CD4-positive, alpha-beta memory T cell (primary cell): ENCODE measurements at regions of chr12 and their contacts with region 1.

Region 1: DNA sequence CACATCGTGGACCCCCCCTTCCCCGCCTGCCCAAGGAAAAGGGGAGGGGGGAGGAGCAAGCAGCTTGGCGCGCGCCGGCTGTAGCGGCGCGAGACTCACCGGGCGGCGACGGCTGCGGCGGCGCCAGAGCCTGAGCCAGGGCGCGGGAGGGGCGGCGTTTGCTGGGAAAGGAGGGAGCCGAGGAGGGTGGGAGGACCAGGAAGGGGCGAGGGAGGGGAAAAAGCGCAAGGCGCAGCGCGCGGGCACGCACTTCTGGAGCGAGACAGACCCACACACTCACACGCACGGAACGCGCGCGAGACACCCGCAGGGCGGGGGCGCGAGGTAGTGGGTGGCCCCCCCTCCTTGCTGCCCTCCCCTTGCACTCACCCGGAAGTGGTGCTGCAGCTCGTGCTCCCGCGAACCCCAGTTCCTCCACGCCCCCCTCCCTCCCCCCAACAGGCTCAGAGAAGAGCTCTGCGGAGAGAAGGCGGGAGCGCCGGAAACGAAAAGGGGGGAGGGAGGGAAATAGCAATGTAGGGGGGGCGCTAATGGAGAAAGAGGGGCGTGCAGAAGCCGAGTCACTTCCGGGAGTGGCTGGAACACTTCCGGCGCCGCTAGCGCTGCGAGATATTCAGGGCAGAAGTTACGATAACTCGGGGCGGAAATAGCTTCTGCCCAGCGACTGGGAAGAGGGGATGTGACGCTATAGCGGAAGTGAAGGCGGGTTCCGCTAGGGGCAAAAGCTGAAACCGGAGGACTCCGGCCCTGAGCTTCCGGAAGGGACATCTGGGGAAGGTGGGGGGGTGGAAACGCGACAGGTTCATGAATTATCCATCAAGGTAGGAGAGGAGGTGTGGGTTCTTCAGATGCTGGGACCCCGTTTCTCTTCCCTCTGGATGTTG is at the start of gene ZNF384:
- DNase-seq: peak; percentile 93 to 98 (median 97)
- H3K4me3 ChIP-seq: peak within 1 kb of the TSS; percentile 59 to 83
- H3K4me3 Mint-ChIP-seq: peak within 1 kb of the TSS; percentile 92 to 98 (median 96)
- H3K27ac ChIP-seq: peak within 1 kb of the TSS; percentile 93
- H3K27ac Mint-ChIP-seq: peak within 1 kb of the TSS; percentile 92 to 100 (median 99)
- H3K4me1 ChIP-seq: peaks cover 58% of the 10 kb centered on the region
- H3K4me1 Mint-ChIP-seq: peaks cover 40 to 59% (median 46%) of the 10 kb centered on the region in 4 donors
- H3K27me3 ChIP-seq: no peaks in the 10 kb centered on the region
- H3K27me3 Mint-ChIP-seq: no peaks in the 10 kb centered on the region
- total RNA-seq, gene ZNF384: 88.6 to 88.7 TPM

Region 2: DNA sequence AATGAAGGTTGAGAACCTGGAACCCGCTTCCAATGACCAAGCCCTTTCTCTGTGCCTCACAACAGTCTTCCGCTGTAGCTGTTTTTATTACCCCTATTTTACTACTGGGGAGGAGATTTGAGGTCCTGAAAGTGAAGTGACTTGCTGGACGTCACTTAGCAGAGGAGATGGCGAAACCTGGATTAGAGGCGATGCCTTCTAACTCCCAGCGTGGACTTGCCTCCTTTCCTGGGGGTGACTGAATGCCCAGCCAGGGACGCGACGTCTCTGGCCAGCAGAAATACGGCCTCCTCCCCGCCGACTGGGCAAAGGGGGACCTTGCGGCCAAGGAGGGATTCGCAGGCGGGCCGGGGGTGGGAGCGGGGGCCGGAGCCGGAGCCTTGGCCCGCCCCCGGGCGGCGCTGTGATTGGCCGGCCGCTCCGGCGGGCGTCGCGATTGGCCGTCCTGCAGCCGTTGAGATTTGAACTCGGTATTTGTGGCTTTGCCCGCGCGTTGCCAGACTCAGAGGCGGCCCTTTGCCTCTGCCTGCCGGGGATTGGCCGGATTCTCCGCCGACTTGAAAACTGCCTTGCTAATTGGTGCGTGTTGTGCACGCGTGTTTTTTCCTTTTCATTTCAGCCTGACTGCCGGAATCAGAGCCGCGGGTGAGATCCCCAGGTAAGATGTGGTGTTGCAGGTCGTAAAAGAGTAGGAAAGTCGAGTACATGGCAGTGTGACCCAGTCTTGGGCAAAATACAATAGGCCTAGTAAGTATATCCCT is 195.6 kb before region 1 on chr12 and contains the start of gene NCAPD2:
- CTCF ChIA-PET with region 1: no interaction called
- POLR2A ChIA-PET with region 1: interaction called, 8 read pairs
- intact Hi-C with region 1: loop called (anchors 1 kb)
- DNase-seq: peak; percentile 96 to 97 (median 96)
- H3K4me3 ChIP-seq: peak within 1 kb of the TSS; percentile 98 to 99
- H3K4me3 Mint-ChIP-seq: peak within 1 kb of the TSS; percentile 89 to 98 (median 96)
- H3K27ac ChIP-seq: peak within 1 kb of the TSS; percentile 87
- H3K27ac Mint-ChIP-seq: peak within 1 kb of the TSS; percentile 90 to 99 (median 97)
- H3K4me1 ChIP-seq: peaks cover 37% of the 10 kb centered on the region
- H3K4me1 Mint-ChIP-seq: peaks cover 26 to 46% (median 35%) of the 10 kb centered on the region in 4 donors
- H3K27me3 ChIP-seq: no peaks in the 10 kb centered on the region
- H3K27me3 Mint-ChIP-seq: no peaks in the 10 kb centered on the region
- total RNA-seq, gene NCAPD2: 38.1 to 39.8 TPM

Region 3: DNA sequence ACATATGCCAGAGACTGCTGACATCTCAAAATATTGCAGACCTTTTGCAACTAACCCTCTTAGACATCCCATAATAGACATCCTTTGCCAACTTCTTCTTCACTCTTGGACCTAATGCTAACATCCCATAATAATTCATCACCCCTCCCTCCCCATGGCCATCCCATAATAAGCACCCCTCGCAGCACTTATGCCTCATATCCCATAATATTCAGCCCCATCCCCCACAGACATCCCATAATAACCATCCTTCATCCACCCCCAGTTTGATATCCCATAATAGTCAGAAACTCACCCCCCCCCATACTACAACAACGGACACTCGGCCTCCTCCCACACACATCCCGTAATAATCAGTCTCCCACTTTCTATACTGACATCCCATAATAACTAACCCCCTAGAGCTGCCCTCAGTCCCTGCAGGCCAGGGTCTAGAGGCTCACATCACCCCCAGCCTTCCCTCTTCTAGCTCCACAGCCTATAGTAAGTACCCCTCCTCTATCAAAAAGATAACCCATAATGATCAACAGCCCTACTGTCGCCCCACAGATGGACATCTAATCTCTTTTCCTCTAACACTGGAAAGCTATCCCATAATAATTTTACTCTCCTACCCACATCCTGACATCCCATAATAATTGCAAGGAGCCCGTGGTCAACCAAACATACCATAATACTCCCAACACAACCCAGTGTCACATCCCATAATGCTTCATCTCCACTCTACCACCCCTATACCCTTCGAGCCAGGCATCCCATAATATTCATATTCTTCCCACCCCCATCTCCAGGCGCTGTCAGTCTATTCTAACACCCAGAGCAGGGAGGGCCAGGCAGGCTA is 81.3 kb before region 1 on chr12:
- CTCF ChIA-PET with region 1: interaction called, 3 read pairs
- POLR2A ChIA-PET with region 1: interaction called, 25 read pairs
- intact Hi-C with region 1: loop called (anchors 1 kb)
- DNase-seq: peak; percentile 74 to 90 (median 79)
- H3K4me3 ChIP-seq: no peak overlapping the region
- H3K4me3 Mint-ChIP-seq: no peak overlapping the region
- H3K27ac ChIP-seq: peak overlapping the region; percentile 84
- H3K27ac Mint-ChIP-seq: no peak overlapping the region
- H3K4me1 ChIP-seq: peaks cover 58% of the 10 kb centered on the region
- H3K4me1 Mint-ChIP-seq: peaks cover 41 to 55% (median 47%) of the 10 kb centered on the region in 4 donors
- H3K27me3 ChIP-seq: no peaks in the 10 kb centered on the region
- H3K27me3 Mint-ChIP-seq: no peaks in the 10 kb centered on the region

Region 4: DNA sequence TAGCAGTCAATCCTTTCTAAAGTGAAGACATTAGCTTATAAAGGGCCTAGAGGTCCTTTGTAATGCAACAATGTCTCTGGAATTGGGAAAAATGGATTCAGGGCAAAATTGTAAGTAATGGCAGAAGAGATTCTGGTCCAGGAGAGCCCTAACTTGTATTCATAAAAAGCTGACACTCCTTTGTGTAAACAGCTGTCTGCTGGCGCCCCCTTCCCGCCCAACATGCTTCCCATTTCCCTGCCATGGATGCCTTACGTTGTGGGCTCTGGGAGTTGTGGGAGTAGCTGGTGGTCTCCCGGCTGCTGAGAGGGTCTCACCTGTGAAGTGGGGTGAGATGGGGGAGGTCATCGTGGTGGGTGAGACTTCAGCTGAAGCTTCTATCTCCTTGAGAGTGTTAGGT is 44.3 kb before region 1 on chr12:
- CTCF ChIA-PET with region 1: no interaction called
- POLR2A ChIA-PET with region 1: no interaction called
- intact Hi-C with region 1: no loop called
- DNase-seq: no peak
- H3K4me3 ChIP-seq: no peak overlapping the region
- H3K4me3 Mint-ChIP-seq: peak overlapping the region in 1 of 8 donors; percentile 42
- H3K27ac ChIP-seq: no peak overlapping the region
- H3K27ac Mint-ChIP-seq: peak overlapping the region in 1 of 7 donors; percentile 44
- H3K4me1 ChIP-seq: peaks cover 9% of the 10 kb centered on the region
- H3K4me1 Mint-ChIP-seq: peaks cover 5 to 16% (median 7%) of the 10 kb centered on the region in 4 donors
- H3K27me3 ChIP-seq: no peaks in the 10 kb centered on the region
- H3K27me3 Mint-ChIP-seq: peaks cover 0 to 5% of the 10 kb centered on the region in 2 donors

Region 5: DNA sequence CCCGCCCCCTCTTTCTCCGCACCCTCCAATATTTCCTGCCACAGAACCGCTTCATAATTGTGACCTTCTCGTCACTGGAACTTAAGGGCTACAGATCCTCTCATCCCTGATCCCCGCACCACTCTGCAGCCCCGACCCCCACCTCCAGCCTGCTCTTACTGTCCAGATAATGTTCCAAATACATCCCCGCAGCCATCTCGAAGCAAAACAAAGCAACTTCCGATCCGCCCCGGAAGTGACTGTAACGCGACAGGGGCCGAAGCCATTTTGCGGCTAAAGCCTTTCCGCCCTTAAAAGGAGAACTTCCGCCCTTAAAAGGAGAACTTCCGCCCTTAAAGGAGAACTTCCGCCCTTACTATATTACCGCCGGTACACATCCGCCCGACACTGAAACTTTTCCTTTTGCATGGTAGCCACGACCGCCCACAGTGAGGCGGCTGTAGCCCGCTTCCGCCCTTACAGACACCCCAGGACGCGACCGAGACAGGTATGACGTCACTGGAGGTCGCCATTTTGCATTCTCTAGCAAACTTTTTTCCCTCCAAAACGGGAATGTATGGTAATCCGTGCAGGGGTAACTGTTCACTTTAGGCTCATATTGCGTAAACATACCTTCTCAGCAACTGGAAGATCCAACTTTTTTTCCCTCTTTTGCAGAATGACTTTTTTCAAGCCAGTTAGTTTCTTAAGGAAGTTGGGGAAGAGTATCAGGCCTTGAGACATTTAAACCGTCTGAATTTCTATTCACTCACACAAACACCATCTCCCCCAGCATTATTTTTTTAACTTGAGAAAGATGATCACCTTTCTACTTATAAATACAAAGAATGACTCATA is 26.1 kb before region 1 on chr12 and contains the start of gene ING4:
- CTCF ChIA-PET with region 1: interaction called, 17 read pairs
- POLR2A ChIA-PET with region 1: interaction called, 83 read pairs
- intact Hi-C with region 1: loop called (anchors 1 kb)
- DNase-seq: peak; percentile 95 to 99 (median 98)
- H3K4me3 ChIP-seq: peak within 1 kb of the TSS; percentile 97
- H3K4me3 Mint-ChIP-seq: peak within 1 kb of the TSS; percentile 91 to 97 (median 94)
- H3K27ac ChIP-seq: peak within 1 kb of the TSS; percentile 79
- H3K27ac Mint-ChIP-seq: peak within 1 kb of the TSS; percentile 88 to 98 (median 98)
- H3K4me1 ChIP-seq: peaks cover 21% of the 10 kb centered on the region
- H3K4me1 Mint-ChIP-seq: peaks cover 20 to 42% (median 30%) of the 10 kb centered on the region in 4 donors
- H3K27me3 ChIP-seq: no peaks in the 10 kb centered on the region
- H3K27me3 Mint-ChIP-seq: no peaks in the 10 kb centered on the region
- total RNA-seq, gene ING4: 82.3 to 83.5 TPM

Region 6: DNA sequence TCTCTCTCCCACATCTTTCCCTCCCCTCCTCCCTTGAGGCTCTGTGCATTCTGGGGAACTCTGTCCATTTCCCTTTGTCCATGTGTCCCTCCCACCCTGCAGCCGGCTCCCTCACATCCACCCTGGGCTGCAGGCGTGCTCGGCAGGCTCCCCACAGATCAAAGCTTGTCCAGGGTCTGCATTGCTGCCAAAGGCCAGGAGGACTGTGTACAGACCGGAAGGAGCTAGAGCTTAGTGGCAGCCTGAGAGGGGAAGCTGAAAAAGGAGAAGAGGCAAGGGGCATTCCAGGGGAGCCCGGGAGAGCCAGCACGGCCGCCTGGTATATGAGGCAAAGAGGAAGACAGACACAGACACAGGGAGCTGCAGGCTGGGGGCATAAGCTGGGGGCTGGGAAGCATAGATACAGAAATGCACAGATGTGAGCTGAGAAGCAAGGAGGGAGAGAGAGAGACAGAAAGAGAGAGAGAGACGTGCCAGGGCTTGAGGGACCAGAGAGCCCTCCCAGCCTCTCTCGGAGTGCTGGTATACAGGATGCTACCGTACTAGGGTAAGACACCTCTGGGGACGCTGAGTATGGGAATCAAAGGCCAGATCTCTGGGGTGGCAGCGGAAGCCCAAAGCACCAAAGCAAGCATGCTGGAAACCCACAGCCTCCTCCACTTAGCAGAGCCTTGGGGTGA is 103.4 kb after region 1 on chr12:
- CTCF ChIA-PET with region 1: interaction called, 4 read pairs
- POLR2A ChIA-PET with region 1: interaction called, 21 read pairs
- intact Hi-C with region 1: no loop called
- DNase-seq: peak; percentile 59 to 73 (median 66)
- H3K4me3 ChIP-seq: peak overlapping the region; percentile 79
- H3K4me3 Mint-ChIP-seq: peak overlapping the region; percentile 95 to 99 (median 98)
- H3K27ac ChIP-seq: peak overlapping the region; percentile 83
- H3K27ac Mint-ChIP-seq: peak overlapping the region; percentile 90 to 99 (median 98)
- H3K4me1 ChIP-seq: peaks cover 55% of the 10 kb centered on the region
- H3K4me1 Mint-ChIP-seq: peaks cover 50 to 92% (median 66%) of the 10 kb centered on the region in 4 donors
- H3K27me3 ChIP-seq: no peaks in the 10 kb centered on the region
- H3K27me3 Mint-ChIP-seq: no peaks in the 10 kb centered on the region

Region 7: DNA sequence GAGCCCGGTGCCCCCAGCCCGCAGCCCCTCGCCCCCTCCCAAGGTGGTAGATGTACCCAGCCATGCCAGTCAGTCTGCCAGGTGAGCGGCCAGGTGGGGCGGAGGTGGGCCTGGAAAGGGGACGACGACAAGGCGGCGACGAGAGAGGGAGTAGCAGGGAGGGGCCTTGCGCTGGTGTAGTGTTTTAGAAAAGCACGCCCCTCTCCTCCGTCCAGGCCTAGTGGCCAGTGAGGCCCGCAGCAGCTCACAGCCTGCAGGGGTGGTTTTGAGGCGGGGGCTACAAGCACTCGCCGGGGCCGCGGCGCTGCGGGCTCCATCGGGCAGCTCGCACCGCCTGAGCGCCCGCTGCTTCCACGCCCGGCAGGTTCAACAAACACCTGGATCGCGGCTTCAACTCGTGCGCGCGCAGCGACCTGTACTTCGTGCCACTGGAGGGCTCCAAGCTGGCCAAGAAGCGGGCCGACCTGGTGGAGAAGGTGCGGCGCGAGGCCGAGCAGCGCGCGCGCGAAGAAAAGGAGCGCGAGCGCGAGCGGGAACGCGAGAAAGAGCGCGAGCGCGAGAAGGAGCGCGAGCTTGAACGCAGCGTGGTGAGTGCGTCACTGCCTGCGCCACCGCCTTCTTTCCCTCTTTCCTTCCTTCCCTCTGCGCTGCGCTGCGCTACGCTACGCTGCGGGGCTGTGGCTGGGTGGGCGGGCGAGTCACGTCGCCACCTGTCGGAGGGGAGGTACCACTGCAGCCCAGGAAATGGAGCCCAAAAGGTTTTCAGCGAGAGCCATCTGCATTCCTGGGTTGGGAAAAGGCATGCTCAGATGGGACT is 248.4 kb after region 1 on chr12:
- CTCF ChIA-PET with region 1: no interaction called
- POLR2A ChIA-PET with region 1: interaction called, 19 read pairs
- intact Hi-C with region 1: no loop called
- DNase-seq: peak; percentile 92 to 96 (median 95)
- H3K4me3 ChIP-seq: peak overlapping the region; percentile 47 to 82
- H3K4me3 Mint-ChIP-seq: peak overlapping the region; percentile 80 to 88 (median 84)
- H3K27ac ChIP-seq: peak overlapping the region; percentile 95
- H3K27ac Mint-ChIP-seq: peak overlapping the region; percentile 93 to 99 (median 94)
- H3K4me1 ChIP-seq: peaks cover 29% of the 10 kb centered on the region
- H3K4me1 Mint-ChIP-seq: peaks cover 20 to 48% (median 35%) of the 10 kb centered on the region in 4 donors
- H3K27me3 ChIP-seq: no peaks in the 10 kb centered on the region
- H3K27me3 Mint-ChIP-seq: no peaks in the 10 kb centered on the region